CD4-positive, alpha-beta memory T cell (primary cell): ENCODE measurements at regions of chr2 and their contacts with region 1.

Region 1: GRCh38 chr2:231961349-231962166 is at the start of gene DIS3L2:
- DNase-seq: peak; percentile 76 to 81 (median 80)
- H3K4me3 ChIP-seq: peak within 1 kb of the TSS; percentile 81 to 98
- H3K4me3 Mint-ChIP-seq: peak within 1 kb of the TSS; percentile 93 to 98 (median 96)
- H3K27ac ChIP-seq: peak within 1 kb of the TSS; percentile 51
- H3K27ac Mint-ChIP-seq: peak within 1 kb of the TSS; percentile 92 to 97 (median 93)
- H3K4me1 ChIP-seq: peaks cover 14% of the 10 kb centered on the region
- H3K4me1 Mint-ChIP-seq: peaks cover 29 to 53% (median 37%) of the 10 kb centered on the region in 4 donors
- H3K27me3 ChIP-seq: no peaks in the 10 kb centered on the region
- H3K27me3 Mint-ChIP-seq: peaks cover 0 to 5% of the 10 kb centered on the region in 2 donors
- total RNA-seq, gene DIS3L2: 56.0 to 59.7 TPM

Region 2: GRCh38 chr2:231786177-231786916 is 175.2 kb before region 1 on chr2 and contains the start of gene COPS7B:
- CTCF ChIA-PET with region 1: no interaction called
- POLR2A ChIA-PET with region 1: no interaction called
- intact Hi-C with region 1: loop called (anchors 1 kb)
- DNase-seq: peak; percentile 73 to 83 (median 75)
- H3K4me3 ChIP-seq: peak within 1 kb of the TSS; percentile 69 to 77
- H3K4me3 Mint-ChIP-seq: peak within 1 kb of the TSS; percentile 90 to 97 (median 92)
- H3K27ac ChIP-seq: peak within 1 kb of the TSS; percentile 73
- H3K27ac Mint-ChIP-seq: peak within 1 kb of the TSS; percentile 88 to 97 (median 92)
- H3K4me1 ChIP-seq: peaks cover 46% of the 10 kb centered on the region
- H3K4me1 Mint-ChIP-seq: peaks cover 47 to 85% (median 65%) of the 10 kb centered on the region in 4 donors
- H3K27me3 ChIP-seq: no peaks in the 10 kb centered on the region
- H3K27me3 Mint-ChIP-seq: no peaks in the 10 kb centered on the region
- total RNA-seq, gene COPS7B: 51.8 to 57.9 TPM

Region 3: GRCh38 chr2:231890896-231891513 is 70.6 kb before region 1 on chr2:
- CTCF ChIA-PET with region 1: no interaction called
- POLR2A ChIA-PET with region 1: no interaction called
- intact Hi-C with region 1: no loop called
- DNase-seq: no peak
- H3K4me3 ChIP-seq: no peak overlapping the region
- H3K4me3 Mint-ChIP-seq: no peak overlapping the region
- H3K27ac ChIP-seq: no peak overlapping the region
- H3K27ac Mint-ChIP-seq: no peak overlapping the region
- H3K4me1 ChIP-seq: no peaks in the 10 kb centered on the region
- H3K4me1 Mint-ChIP-seq: no peaks in the 10 kb centered on the region
- H3K27me3 ChIP-seq: no peaks in the 10 kb centered on the region
- H3K27me3 Mint-ChIP-seq: peaks cover 12% of the 10 kb centered on the region in 2 donors